Mammary epithelial cell (primary cell): ENCODE measurements at regions of chr1 and their contacts with region 1.

Region 1: GRCh38 chr1:54310439-54311328 is 95.5 kb downstream of the SSBP3 start:
- DNase-seq: peak; percentile 62
- H3K4me3 ChIP-seq: no peak overlapping the region
- H3K27ac ChIP-seq: no peak overlapping the region
- H3K4me1 ChIP-seq: peaks cover 44% of the 10 kb centered on the region
- H3K27me3 ChIP-seq: no peaks in the 10 kb centered on the region
- CTCF ChIP-seq: peak; percentile 30 to 43

Region 2: DNA sequence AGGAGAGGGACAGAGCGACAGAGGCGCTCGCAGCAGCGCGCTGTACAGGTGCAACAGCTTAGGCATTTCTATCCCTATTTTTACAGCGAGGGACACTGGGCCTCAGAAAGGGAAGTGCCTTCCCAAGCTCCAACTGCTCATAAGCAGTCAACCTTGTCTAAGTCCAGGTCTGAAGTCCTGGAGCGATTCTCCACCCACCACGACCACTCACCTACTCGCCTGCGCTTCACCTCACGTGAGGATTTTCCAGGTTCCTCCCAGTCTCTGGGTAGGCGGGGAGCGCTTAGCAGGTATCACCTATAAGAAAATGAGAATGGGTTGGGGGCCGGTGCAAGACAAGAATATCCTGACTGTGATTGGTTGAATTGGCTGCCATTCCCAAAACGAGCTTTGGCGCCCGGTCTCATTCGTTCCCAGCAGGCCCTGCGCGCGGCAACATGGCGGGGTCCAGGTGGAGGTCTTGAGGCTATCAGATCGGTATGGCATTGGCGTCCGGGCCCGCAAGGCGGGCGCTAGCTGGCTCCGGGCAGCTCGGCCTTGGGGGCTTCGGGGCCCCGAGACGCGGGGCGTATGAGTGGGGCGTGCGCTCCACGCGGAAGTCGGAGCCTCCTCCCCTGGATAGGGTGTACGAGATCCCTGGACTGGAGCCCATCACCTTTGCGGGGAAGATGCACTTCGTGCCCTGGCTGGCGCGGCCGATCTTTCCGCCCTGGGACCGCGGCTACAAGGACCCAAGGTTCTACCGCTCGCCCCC is 110.7 kb before region 1 on chr1 and contains the starts of genes CYB5RL and MRPL37:
- CTCF ChIA-PET with region 1: interaction called, 38 read pairs
- dilution Hi-C with region 1: no loop called
- in situ Hi-C with region 1: no loop called
- intact Hi-C with region 1: no loop called
- DNase-seq: peak; percentile 96
- H3K4me3 ChIP-seq: peak within 1 kb of the TSS; percentile 73 to 91 (median 76)
- H3K27ac ChIP-seq: peak within 1 kb of the TSS; percentile 36
- H3K4me1 ChIP-seq: peaks cover 16% of the 10 kb centered on the region
- H3K27me3 ChIP-seq: no peaks in the 10 kb centered on the region
- CTCF ChIP-seq: no peak
- total RNA-seq, gene CYB5RL: 1.7 to 4.0 TPM
- total RNA-seq, gene MRPL37: 90.9 to 96.2 TPM

Region 3: DNA sequence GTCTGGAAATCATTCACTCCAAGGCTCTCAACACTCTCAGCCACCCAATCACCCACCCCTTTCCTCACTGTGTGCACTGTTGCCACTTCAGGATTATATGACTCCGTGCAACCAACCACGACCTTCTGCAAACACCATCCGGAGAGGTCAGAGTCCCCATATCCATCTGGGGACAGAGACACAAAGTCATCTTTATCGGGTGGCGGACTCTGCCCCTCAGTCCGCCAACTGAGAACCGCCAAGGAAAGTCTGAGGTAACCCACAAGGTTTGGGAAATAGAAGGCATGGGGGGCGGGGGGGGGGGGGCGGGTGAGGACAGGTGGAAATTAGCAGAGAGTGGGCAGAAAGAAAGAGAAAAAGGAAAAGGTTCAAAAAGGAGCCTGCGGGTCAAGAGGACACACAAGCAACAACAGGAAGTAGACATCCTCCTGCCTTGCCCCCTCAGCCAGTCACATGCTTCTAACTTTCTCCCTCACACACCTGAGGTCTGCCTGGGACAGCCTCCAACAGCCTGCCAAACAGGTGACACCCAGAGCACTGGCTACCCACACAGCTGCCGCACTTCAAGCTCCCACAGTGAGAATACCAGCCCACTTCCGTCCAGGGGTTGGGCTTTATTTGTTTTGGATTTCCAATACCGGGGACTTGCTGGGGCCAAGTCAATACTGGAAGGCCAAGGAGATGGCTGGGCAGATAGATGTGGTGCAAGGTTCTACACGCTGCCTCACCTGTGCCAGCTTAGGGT is 37.4 kb after region 1 on chr1:
- CTCF ChIA-PET with region 1: no interaction called
- dilution Hi-C with region 1: no loop called
- in situ Hi-C with region 1: no loop called
- intact Hi-C with region 1: no loop called
- DNase-seq: no peak
- H3K4me3 ChIP-seq: no peak overlapping the region
- H3K27ac ChIP-seq: no peak overlapping the region
- H3K4me1 ChIP-seq: no peaks in the 10 kb centered on the region
- H3K27me3 ChIP-seq: no peaks in the 10 kb centered on the region
- CTCF ChIP-seq: no peak

Region 4: GRCh38 chr1:54397090-54397591 is 86.5 kb after region 1 on chr1:
- CTCF ChIA-PET with region 1: no interaction called
- dilution Hi-C with region 1: no loop called
- in situ Hi-C with region 1: no loop called
- intact Hi-C with region 1: no loop called
- DNase-seq: no peak
- H3K4me3 ChIP-seq: no peak overlapping the region
- H3K27ac ChIP-seq: no peak overlapping the region
- H3K4me1 ChIP-seq: no peaks in the 10 kb centered on the region
- H3K27me3 ChIP-seq: no peaks in the 10 kb centered on the region
- CTCF ChIP-seq: no peak

Region 5: DNA sequence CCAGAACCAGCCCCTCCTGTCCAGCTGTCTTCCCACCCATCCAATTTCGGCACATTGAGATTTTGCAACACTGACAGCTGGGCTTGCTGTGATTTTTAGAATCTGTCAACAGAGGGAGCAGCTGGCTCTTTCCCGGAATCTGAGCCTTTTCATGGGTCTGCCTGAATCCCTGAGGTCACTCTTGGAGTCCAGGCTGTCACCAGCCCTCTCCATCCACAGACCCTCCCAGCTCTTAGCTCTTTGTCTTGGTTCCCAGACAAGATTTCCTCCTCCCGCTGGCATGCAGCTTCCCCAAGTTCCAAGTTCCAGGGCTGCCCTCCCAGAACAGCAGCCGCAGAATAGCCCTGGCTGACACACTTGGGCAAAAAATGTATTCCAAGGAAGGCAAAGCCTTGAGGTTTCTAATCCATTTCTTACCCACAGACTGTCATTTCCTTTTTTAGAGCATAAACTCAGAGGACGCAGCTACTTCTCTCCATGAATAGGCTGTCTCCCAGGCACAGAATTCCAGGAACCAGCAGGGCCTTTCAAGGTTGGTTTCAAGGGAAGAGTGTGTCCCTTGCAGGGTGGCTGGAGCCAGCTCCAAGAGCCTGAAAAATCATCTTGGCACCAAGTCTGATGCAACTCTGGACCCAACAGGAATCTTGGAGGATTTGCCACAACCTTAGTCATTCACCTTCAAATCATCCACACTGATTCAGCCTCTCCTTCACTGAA is 662.7 kb after region 1 on chr1:
- CTCF ChIA-PET with region 1: no interaction called
- dilution Hi-C with region 1: no loop called
- in situ Hi-C with region 1: no loop called
- intact Hi-C with region 1: loop called (anchors 5 kb)
- DNase-seq: no peak
- H3K4me3 ChIP-seq: no peak overlapping the region
- H3K27ac ChIP-seq: no peak overlapping the region
- H3K4me1 ChIP-seq: peaks cover 33% of the 10 kb centered on the region
- H3K27me3 ChIP-seq: no peaks in the 10 kb centered on the region
- CTCF ChIP-seq: peak; percentile 31 to 59